ENCODE measurements at regions of chr5 and their contacts with region 1.

Region 1: GRCh38 chr5:96288166-96288844 is 144.7 kb downstream of the PCSK1 start:
- DNase-seq: no peak
- ATAC-seq: no peak
- H3K4me3 ChIP-seq: no peak overlapping the region
- H3K27ac ChIP-seq: peak overlapping the region in 1 of 10 donors; percentile 10
- H3K4me1 ChIP-seq: peaks cover 0 to 13% (median 0%) of the 10 kb centered on the region in 9 donors
- H3K27me3 ChIP-seq: no peaks in the 10 kb centered on the region
- CTCF ChIP-seq: no peak

Region 2: DNA sequence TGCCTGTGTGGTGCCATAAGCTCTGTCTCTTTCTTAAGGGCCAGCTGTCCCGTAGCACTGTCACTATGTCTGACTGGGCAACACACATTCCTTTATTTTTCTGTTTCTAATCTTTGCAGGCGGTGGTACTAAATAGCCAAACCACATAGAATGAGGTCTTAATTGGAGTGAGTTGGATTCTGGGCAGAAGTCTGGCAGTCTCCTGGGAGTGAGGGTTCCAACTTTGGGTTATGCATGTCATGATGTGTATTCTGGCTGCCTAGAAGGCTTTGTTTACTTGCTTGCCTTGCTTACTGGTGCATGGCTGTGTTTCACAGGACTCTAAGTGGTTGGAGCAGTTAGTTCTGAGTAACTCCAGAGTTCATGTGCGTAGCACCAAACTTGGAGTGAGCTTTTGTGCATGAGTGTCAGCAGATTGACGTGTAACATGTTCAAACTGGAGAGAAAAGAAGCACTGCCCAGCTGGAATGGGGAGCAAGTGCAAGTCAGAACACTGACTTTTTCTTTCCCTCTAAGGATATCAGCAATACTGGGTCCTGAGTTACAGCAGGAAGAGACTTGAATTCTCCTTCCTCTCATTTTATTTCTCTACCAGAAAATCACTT is 41.1 kb before region 1 on chr5:
- intact Hi-C with region 1: loop called in 2 of 10 experiments (anchors 5 kb)
- DNase-seq: peak in 1 of 2 donors; percentile 52
- ATAC-seq: peak; percentile 67 to 97 (median 92)
- H3K4me3 ChIP-seq: peak overlapping the region in 3 of 10 donors; percentile 2 to 10 (median 5)
- H3K27ac ChIP-seq: peak overlapping the region; percentile 54 to 86 (median 74)
- H3K4me1 ChIP-seq: peaks cover 0 to 48% (median 17%) of the 10 kb centered on the region in 9 donors
- H3K27me3 ChIP-seq: no peaks in the 10 kb centered on the region
- CTCF ChIP-seq: no peak

Region 3: GRCh38 chr5:96324708-96325107 is 36.4 kb after region 1 on chr5:
- intact Hi-C with region 1: no loop called
- DNase-seq: no peak
- ATAC-seq: no peak
- H3K4me3 ChIP-seq: no peak overlapping the region
- H3K27ac ChIP-seq: no peak overlapping the region
- H3K4me1 ChIP-seq: no peaks in the 10 kb centered on the region
- H3K27me3 ChIP-seq: no peaks in the 10 kb centered on the region
- CTCF ChIP-seq: no peak